H1 (cell line): ENCODE measurements at regions of chr10 and their contacts with region 1.

Region 1: DNA sequence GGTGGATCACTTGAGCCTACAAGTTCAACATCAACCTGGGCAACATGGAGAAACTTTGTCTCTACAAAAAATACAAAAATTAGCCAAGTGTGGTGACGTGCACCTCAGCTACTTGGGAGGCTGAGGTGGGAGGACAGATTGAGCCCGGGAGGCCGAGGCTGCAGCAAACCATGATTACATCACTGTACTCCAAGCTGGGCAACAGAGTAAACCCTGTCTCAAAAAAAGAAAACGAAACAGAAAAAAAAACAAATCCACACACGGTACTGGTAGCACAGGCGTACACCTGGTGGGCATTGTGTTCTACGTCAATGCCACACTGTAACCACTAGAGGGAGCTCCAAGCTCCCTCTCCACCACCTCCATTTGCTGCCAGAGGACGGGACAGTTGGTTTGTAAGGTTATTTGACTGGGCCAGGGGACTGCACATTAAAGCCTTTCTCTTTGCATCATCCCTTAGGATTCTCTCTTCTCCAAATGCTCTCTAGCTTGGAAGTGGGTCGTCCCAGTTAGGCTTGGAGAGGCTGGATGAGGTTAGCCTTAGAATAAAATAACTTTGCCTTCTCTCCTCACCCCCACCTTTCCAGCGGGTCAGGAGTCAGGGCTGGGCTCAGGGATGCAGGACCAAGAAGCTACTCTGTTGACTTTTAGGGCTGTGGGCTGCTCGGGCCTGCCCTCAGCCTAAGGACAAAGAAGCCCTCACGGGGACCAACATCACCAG is 130.8 kb downstream of the SORBS1 start:
- DNase-seq: peak in 1 of 2 experiments; percentile 61
- H3K4me3 ChIP-seq: no peak overlapping the region
- H3K27ac ChIP-seq: no peak overlapping the region
- H3K4me1 ChIP-seq: peaks cover 0 to 2% (median 0%) of the 10 kb centered on the region in 4 experiments; a peak in 2 of 7 replicates
- H3K27me3 ChIP-seq: no peaks in the 10 kb centered on the region
- CTCF ChIP-seq: peak; percentile 91 to 98 (median 96)
- EP300 ChIP-seq: no peak
- POLR2A ChIP-seq: no peak
- RAD21 ChIP-seq: peak; percentile 98 to 99

Region 2: GRCh38 chr10:95374597-95375209 is 55.7 kb before region 1 on chr10:
- CTCF ChIA-PET with region 1: interaction called, 79 read pairs
- POLR2A ChIA-PET with region 1: no interaction called
- DNase-seq: peak; percentile 56 to 85
- H3K4me3 ChIP-seq: no peak overlapping the region
- H3K27ac ChIP-seq: no peak overlapping the region
- H3K4me1 ChIP-seq: peaks cover 0 to 5% (median 4%) of the 10 kb centered on the region in 4 experiments; a peak in 4 of 7 replicates
- H3K27me3 ChIP-seq: no peaks in the 10 kb centered on the region
- CTCF ChIP-seq: peak; percentile 91 to 100 (median 100)
- EP300 ChIP-seq: no peak
- POLR2A ChIP-seq: no peak
- RAD21 ChIP-seq: peak; percentile 96 to 99

Region 3: GRCh38 chr10:95459446-95460045 is 29.2 kb after region 1 on chr10:
- CTCF ChIA-PET with region 1: interaction called, 284 read pairs
- POLR2A ChIA-PET with region 1: interaction called, 3 read pairs
- DNase-seq: no peak
- H3K4me3 ChIP-seq: no peak overlapping the region
- H3K27ac ChIP-seq: no peak overlapping the region
- H3K4me1 ChIP-seq: peaks cover 0 to 15% (median 13%) of the 10 kb centered on the region in 4 experiments; a peak in 4 of 7 replicates
- H3K27me3 ChIP-seq: no peaks in the 10 kb centered on the region
- CTCF ChIP-seq: no peak
- EP300 ChIP-seq: no peak
- POLR2A ChIP-seq: no peak
- RAD21 ChIP-seq: no peak

Region 4: DNA sequence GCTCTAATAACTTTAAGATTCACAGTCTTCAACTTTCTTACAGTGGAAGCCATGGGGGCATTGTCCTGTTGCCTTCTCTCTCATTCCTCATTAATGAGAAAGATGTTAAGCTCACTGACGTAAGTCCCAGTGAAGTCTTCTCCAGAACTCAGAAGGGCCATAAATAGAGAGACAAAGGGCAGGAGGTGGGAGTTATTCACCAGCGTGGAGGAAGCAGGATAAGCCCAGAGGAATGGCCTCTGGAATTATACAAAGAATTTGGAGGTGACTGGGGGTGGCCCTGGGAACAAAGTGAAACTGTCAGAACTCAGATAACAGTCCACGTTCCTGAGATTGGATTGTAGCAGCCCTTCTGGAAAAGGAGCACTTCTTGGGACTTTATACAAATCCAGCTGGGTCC is 78.3 kb after region 1 on chr10:
- CTCF ChIA-PET with region 1: interaction called, 12 read pairs
- POLR2A ChIA-PET with region 1: no interaction called
- DNase-seq: no peak
- H3K4me3 ChIP-seq: no peak overlapping the region
- H3K27ac ChIP-seq: no peak overlapping the region
- H3K4me1 ChIP-seq: peaks cover 0 to 10% (median 6%) of the 10 kb centered on the region in 4 experiments; a peak in 5 of 7 replicates
- H3K27me3 ChIP-seq: no peaks in the 10 kb centered on the region
- CTCF ChIP-seq: no peak
- EP300 ChIP-seq: no peak
- POLR2A ChIP-seq: no peak
- RAD21 ChIP-seq: no peak

Region 5: DNA sequence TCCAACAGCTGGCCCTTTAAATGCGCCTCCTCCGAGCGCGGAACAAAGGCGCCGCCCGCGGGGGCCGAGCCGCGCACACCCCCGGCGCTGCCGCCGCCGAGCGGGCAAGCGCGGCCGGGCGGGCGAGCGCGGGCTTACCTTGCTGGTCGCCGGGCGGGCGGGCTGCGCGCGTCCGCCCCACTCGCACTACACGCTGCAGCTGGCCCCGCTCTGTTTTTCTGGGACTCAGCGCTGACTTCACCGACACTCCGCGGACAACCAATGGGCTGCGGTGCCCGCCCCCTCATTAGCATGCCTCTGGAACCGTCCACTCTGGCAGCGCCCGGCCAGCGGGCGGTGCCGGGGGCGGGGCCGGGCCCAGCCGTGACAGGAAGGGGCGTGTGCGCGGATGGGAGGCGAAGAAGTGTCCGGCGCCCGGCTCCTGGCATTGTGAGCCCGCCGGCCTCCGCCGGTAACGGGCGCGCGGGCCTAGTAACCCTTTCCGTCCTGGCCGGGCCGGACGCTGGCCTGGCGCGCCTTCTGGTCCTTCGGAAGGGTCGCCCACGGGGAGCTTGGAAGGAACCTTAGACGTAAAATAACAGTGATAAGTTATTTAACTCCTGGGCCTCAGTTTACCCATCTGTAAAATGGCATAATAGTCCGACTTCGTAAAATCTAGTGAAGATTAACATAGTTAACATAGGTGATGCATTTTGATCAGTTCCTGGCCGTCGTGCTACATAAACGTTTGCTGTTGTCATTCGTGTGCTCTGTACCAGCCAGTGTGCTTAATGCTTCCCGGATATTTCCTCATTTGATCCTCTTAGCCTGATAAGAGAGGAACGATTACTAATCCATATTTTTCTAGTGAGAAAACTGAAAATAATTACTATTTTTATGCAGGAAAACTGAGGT is 131.0 kb after region 1 on chr10 and contains the start of gene SORBS1:
- CTCF ChIA-PET with region 1: interaction called, 25 read pairs
- POLR2A ChIA-PET with region 1: no interaction called
- DNase-seq: peak; percentile 80 to 92
- H3K4me3 ChIP-seq: peak within 1 kb of the TSS; percentile 59 to 93 (median 78)
- H3K27ac ChIP-seq: no peak within 1 kb of the TSS; the same call in 1 of the 2 replicates
- H3K4me1 ChIP-seq: peaks cover 6 to 30% (median 17%) of the 10 kb centered on the region in 4 experiments; a peak in 6 of 7 replicates
- H3K27me3 ChIP-seq: no peaks in the 10 kb centered on the region; a peak in 3 of 7 replicates
- CTCF ChIP-seq: no peak
- EP300 ChIP-seq: no peak
- POLR2A ChIP-seq: peak in 1 of 2 experiments; percentile 66; a peak in 2 of 3 replicates
- RAD21 ChIP-seq: 0 out of 4 replicates have a peak, but pooled peaks of 1 of the 2 experiments have one; percentile 4
- total RNA-seq, gene SORBS1: 35.0 and 36.3 TPM in 2 replicates

Region 6: DNA sequence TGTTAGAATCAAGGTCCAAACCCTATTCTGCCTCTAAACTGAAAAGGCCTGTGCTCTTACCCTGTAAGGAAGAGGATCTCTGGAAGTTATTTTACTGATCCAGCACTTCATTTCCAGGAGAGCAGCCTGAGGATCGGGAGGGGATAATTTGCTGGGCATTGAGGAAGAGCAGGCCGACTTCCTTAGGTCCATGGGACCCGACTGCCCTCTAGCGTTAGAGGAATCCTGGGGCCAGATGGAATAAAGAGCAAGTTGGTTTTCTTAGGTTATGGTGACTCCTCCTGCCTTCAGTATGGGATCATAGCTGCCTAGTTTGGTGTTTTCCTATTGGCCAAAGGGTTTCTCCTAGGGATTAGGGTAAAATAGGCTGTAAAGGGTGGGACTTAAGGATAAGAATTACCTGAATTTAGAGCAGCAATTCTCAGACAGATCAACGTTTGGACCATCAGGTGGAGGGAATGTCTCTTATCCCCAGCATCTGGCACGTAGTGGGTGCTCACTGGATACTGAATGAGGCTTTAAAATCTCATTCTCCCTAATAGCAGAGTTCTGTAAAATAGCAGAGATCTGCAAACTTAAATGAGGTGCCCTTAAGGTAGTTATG is 170.8 kb after region 1 on chr10:
- CTCF ChIA-PET with region 1: interaction called, 304 read pairs
- POLR2A ChIA-PET with region 1: interaction called, 3 read pairs
- DNase-seq: peak; percentile 84 to 88
- H3K4me3 ChIP-seq: no peak overlapping the region
- H3K27ac ChIP-seq: no peak overlapping the region
- H3K4me1 ChIP-seq: peaks cover 0 to 3% (median 0%) of the 10 kb centered on the region in 4 experiments; a peak in 1 of 7 replicates
- H3K27me3 ChIP-seq: no peaks in the 10 kb centered on the region
- CTCF ChIP-seq: peak; percentile 78 to 99 (median 98)
- EP300 ChIP-seq: no peak
- POLR2A ChIP-seq: no peak
- RAD21 ChIP-seq: peak; percentile 100